GM10248 (cell line): ENCODE measurements at regions of chr5 and their contacts with region 1.

Region 1: GRCh38 chr5:135457424-135458071 is 5.4 kb upstream of the TIFAB start:
- DNase-seq: peak; percentile 80
- CTCF ChIP-seq: peak; percentile 94

Region 2: DNA sequence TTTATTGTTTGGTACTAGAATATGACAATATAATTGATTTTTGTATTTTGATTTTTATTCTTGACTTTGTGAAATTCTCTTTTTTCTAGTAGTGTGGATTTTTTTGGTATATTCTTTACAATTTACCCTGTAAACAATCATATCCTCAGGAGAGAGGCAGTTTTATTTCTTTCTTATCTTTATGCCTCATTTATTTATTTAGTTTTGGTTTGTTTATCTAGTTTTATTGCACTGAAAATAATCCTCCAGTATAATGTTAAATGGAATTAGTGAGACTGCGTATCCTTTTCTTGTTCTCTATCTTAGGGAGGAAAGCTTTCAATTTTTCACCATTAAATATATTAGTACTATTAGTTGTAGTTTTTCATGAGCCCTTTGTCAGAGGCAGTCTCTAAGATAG is 167.9 kb before region 1 on chr5:
- CTCF ChIA-PET with region 1: no interaction called
- POLR2A ChIA-PET with region 1: no interaction called
- DNase-seq: no peak
- CTCF ChIP-seq: no peak

Region 3: DNA sequence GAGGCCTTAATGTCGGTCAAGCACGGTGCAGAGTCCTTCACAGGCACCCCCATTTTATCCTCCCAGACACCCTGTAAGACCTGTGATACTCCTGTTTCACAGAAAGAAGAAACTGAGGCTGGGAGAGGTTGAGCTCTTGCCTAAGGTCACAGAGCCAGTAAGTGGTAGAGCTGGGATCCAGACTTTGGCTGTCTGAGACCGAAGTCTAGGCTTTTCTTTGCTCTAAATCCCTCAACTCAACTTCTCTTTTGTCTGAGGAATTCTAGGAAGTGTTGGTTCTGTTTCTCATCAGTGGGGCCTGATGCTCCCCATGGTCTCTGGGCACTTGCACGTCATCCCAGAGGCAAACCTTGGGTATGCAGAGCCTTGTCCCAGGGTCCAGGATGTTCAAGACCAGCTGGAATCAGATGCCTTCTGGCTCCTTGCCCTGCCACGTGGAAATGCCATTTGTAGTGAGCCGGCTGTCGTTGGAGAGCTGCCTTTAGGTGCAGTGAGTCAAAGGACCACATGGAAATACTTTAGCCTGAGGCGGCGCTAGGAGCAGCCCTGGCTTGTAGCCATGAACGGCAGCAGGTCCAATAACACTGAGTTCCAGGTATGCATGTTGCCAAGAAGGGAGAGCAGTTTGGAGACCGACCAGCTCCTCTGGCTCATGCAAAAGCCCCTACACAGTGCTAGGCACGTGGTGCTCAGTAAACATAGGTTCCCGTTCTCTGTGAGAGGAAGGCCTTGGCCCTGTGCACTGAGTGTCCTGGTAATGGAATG is 19.6 kb before region 1 on chr5:
- CTCF ChIA-PET with region 1: interaction called, 70 read pairs
- POLR2A ChIA-PET with region 1: no interaction called
- DNase-seq: no peak
- CTCF ChIP-seq: no peak

Region 4: DNA sequence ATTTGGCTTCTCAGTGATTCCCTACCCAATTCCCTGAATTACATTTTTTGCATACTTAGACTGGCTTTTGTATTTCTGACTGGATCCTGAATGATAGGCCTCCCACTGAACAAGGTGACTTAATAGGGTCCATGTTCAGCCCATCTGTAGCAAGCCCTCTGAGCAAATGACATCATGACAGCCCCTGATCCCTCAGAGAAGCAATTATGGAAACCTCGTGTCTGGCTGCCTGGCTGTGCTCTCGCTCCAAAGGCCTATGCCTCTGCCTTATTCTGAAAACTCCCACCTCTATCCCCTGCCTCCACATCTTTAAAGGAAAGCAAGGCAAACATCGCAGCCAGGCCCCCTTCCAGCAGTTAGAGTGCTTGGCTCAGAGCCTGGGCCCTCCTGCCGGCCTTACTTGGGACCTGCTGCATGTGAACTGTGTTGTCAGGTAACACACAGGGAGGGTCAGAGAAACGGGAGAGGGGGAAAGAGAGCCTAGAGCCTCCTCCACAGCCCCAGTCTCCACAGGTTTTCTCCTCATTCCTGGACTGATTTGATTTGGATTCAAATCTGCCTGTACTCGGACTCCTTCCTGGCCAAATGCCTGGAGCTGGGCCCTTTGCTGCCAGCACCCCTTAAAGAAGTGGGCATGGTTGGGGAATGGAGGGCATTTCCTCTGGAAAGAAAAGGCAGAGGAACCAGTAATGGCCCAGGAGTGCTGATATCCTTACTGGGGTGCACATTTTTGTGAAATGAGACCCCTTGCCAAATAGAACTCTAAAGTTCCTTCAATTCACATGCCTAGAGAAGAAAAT is 14.2 kb before region 1 on chr5:
- CTCF ChIA-PET with region 1: interaction called, 75 read pairs
- POLR2A ChIA-PET with region 1: no interaction called
- DNase-seq: no peak
- CTCF ChIP-seq: no peak

Region 5: GRCh38 chr5:135476615-135477582 is 19.4 kb after region 1 on chr5:
- CTCF ChIA-PET with region 1: interaction called, 19 read pairs
- POLR2A ChIA-PET with region 1: no interaction called
- DNase-seq: no peak
- CTCF ChIP-seq: no peak

Region 6: GRCh38 chr5:135641734-135642361 is 184.3 kb after region 1 on chr5:
- CTCF ChIA-PET with region 1: no interaction called
- POLR2A ChIA-PET with region 1: no interaction called
- DNase-seq: no peak
- CTCF ChIP-seq: no peak

Region 7: GRCh38 chr5:136123236-136123768 is 665.8 kb after region 1 on chr5:
- CTCF ChIA-PET with region 1: no interaction called
- POLR2A ChIA-PET with region 1: no interaction called
- DNase-seq: no peak
- CTCF ChIP-seq: no peak